ENCODE measurements at regions of chr11 and their contacts with region 1.

Region 1: GRCh38 chr11:12288212-12288930 is 89.0 kb upstream of the PARVA start:
- DNase-seq: peak; percentile 83
- H3K4me3 ChIP-seq: peak overlapping the region; percentile 27
- CTCF ChIP-seq: peak; percentile 94

Region 2: DNA sequence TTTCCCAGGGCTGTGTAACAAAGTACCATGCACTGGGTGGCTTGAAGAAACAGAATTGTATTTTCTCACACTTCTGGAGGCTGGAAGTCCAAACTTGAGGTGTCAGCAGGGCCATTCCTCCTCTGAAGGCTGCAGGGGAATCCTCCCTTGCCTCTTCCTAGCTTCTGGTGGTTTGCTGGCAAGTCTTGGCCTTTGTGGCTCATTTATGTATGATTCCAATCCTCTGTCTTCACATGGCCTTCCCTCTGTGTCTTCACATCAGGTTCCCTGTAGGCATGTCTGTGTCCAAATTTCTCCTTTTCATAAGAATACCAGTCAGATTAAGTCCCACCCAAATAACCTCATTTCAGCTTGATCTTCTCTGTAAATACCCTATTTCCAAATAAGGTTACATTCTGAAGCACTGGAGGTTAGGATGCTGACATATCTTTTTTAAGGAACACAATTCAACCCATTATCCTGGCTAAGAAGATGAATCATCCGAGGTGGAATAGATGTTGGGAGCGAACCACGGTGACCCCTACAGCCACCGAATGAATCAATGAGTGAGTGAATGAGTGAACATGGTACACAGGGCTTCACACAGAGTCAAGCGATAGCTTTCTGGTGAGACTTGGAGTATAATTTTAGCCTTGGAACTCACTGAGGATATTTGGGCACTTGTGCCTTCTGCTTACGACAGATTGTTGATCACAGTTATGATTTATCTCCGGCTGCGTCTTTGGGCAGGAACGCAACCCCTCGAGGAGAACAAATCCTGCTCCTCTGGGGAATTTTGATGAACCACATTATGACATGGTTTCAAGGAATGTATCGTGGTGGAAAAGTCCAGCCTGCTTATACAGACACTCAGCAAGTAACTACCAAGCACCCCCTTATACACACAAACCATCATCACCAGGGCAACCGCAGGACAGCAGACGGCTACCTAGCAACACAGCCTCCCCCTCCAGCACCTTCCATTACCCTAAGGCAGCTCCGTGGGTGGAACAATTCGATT is 212.2 kb before region 1 on chr11:
- CTCF ChIA-PET with region 1: interaction called, 3 read pairs
- POLR2A ChIA-PET with region 1: interaction called, 11 read pairs
- DNase-seq: peak; percentile 100
- H3K4me3 ChIP-seq: no peak overlapping the region
- CTCF ChIP-seq: no peak

Region 3: DNA sequence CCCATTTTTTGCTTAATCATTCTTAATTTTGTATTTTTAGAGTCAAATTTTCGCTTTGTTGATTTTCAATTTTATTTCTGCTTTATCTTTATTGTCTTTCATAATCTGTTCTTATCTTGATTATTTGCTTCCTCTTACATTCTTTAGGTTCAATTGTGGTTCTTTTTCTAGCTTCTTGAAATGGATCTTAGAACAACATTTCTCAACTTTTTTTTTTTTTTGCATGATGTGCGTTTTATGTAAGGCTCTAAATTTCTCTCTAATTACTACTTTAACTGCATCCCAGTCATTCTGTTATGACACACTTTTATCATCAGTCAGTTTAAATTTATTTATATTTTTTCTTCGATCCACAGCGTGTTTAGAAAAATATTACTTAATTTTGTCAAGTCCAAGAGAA is 23.8 kb after region 1 on chr11:
- CTCF ChIA-PET with region 1: interaction called, 13 read pairs
- POLR2A ChIA-PET with region 1: no interaction called
- DNase-seq: no peak
- H3K4me3 ChIP-seq: no peak overlapping the region
- CTCF ChIP-seq: no peak

Region 4: DNA sequence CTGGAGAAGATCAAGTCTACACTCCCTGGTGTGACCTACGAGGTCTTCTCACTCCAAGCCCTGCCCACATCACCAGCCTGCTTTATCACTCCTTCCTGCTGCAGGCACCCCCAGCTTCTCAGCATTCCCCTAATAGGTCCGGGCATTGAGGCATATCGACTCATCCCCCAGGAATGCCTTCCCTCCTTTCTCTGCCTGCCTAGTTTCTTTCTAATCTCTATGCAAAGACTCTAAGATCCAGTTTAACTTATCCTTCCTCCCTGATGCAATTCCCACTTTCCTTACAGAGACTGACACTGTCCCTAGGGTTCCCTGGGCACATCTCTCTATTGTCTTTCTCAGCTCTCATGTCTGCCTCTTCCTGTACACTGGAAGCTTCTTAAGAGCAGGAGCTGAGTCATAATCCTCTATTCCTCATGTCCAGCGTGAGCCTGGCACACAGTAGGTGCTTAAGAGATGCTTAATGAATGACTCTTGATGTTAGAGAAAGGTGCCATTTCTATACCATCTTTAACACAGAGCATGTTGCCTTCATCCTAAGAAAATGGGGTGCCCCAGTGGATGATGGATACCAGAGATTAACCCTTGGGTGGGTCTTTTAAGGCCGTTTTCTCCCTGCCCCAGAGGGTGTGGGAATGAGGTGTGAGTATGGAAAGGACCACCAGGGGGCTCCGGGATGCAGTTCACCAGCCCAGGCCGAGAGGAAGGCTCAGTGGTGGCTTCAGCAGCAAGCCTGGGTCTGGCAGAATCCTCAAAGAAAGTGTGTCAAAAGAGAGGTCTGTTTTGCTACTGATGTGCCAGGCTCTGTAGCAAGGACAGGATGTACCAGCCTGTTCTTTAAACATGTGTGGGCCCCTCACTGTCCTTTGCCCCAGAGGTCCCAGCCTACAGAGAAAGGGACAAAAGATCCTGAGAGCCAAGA is 123.7 kb after region 1 on chr11:
- CTCF ChIA-PET with region 1: interaction called, 12 read pairs
- POLR2A ChIA-PET with region 1: no interaction called
- DNase-seq: peak; percentile 90
- H3K4me3 ChIP-seq: no peak overlapping the region
- CTCF ChIP-seq: peak; percentile 84

Region 5: GRCh38 chr11:12888525-12889158 is 600.3 kb after region 1 on chr11:
- CTCF ChIA-PET with region 1: interaction called, 31 read pairs
- POLR2A ChIA-PET with region 1: interaction called, 4 read pairs
- DNase-seq: peak; percentile 71
- H3K4me3 ChIP-seq: no peak overlapping the region
- CTCF ChIP-seq: peak; percentile 75

Region 6: DNA sequence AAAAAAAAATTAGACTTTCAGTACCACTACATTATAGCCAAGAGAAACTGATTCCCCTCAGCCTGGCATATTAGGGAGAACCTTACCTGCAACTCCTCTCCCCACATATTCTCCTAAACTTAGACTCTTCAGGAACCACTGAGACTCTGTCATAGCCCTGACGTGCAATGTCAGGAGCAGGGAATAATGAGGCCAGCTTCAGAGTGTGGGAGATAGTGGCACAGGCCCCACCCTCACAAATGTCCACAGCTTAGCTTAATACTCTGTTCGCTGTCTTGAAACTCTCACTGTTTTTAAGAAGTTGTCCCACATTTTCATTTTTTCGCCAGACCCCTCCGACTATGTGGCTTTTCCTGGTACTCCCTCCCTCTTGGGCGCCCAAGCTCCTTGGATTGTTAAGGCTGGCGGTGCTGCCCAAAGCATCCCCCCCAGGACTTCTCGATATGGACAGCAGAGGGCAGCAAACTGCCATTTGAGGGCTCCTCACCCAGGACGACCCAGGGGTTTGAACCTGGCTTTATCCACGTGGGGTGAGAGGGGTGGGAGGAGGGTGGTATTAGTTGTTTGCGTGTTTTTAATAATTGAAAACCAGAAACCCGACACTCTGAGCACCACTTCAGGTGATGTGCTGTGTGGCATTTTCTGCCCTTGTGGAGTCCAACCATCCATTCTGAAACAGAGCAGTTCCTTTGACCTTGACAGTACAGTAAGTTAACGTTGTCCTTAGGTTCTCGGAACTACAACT is 675.6 kb after region 1 on chr11:
- CTCF ChIA-PET with region 1: interaction called, 106 read pairs
- POLR2A ChIA-PET with region 1: no interaction called
- DNase-seq: no peak
- H3K4me3 ChIP-seq: no peak overlapping the region
- CTCF ChIP-seq: peak; percentile 84

Measured in AG04449 (cell line).